ENCODE measurements at regions of chr2 and their contacts with region 1.

Region 1: GRCh38 chr2:64516628-64517510 is 7.3 kb upstream of the AFTPH start:
- DNase-seq: no peak
- ATAC-seq: no peak
- H3K4me3 Mint-ChIP-seq: no peak overlapping the region
- H3K27ac Mint-ChIP-seq: no peak overlapping the region
- H3K4me1 Mint-ChIP-seq: no peaks in the 10 kb centered on the region
- H3K27me3 Mint-ChIP-seq: peaks cover 2% of the 10 kb centered on the region
- CTCF ChIP-seq: no peak

Region 2: DNA sequence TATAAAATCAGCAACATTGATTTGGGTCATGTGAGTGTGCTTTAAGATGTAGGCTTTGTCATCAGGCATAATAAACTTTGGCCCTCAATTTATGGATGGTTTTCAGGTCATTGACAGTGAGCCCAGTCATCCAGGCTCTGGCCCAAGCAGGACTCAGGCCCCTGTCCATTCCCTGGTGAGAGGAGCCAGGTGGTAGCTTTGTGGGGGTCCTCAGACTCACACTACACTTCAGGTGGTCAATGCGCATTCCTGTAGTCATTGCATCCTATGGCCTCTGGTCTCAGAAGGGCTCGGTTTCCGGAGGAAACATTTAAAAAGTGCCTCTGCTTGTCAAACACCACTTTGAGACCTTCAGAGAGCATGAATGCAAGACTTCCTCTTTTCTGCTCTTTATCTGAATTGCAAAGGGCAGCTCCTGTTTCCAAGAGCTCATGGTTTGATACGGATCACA is 42.7 kb before region 1 on chr2:
- CTCF ChIA-PET with region 1: no interaction called
- POLR2A ChIA-PET with region 1: no interaction called
- intact Hi-C with region 1: no loop called
- DNase-seq: no peak
- ATAC-seq: no peak
- H3K4me3 Mint-ChIP-seq: no peak overlapping the region
- H3K27ac Mint-ChIP-seq: no peak overlapping the region
- H3K4me1 Mint-ChIP-seq: peaks cover 11% of the 10 kb centered on the region
- H3K27me3 Mint-ChIP-seq: no peaks in the 10 kb centered on the region
- CTCF ChIP-seq: no peak

Region 3: GRCh38 chr2:64562148-64562784 is 45.4 kb after region 1 on chr2:
- CTCF ChIA-PET with region 1: interaction called, 25 read pairs
- POLR2A ChIA-PET with region 1: interaction called, 3 read pairs
- intact Hi-C with region 1: loop called (anchors 2 kb)
- DNase-seq: no peak
- ATAC-seq: peak; percentile 66
- H3K4me3 Mint-ChIP-seq: no peak overlapping the region
- H3K27ac Mint-ChIP-seq: peak overlapping the region; percentile 30
- H3K4me1 Mint-ChIP-seq: peaks cover 41% of the 10 kb centered on the region
- H3K27me3 Mint-ChIP-seq: no peaks in the 10 kb centered on the region
- CTCF ChIP-seq: peak; percentile 70

Measured in activated CD8-positive, alpha-beta T cell treated with anti-CD3 and anti-CD28 coated beads for 36 hours (primary cell).